Mammary epithelial cell (primary cell): ENCODE measurements at regions of chr11 and their contacts with region 1.

Region 1: DNA sequence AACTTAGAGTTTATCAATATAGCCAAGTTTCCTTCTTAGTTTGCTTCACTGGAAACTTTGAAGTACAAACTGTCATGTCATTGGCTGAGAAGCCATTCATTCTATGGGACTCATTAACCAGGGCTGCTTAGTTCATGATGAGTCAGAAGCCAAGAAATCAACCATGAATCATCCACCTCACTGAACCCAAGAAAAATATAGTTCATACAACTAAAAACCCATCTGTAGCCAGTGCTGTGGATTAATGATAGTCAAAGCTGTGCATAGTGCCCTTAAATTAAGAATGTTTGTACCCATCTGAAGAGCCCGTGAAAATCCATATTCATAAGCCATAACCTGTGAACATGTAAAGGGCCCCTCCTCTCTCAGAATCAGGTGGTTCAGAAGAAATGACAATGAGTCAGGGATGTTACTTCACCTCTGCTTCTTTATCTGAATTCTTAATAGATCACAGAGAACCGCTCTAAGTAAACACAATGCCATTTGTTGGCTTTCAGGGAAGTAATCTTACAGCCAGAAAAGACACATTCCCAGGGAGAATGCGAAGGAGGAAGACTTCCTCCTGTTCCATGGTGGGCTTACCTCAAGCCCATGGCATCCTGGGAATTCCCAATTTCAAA is 25.4 kb downstream of the MMP20 start:
- DNase-seq: peak; percentile 95
- H3K4me3 ChIP-seq: peak overlapping the region in 1 of 3 experiments; percentile 10
- H3K27ac ChIP-seq: peak overlapping the region; percentile 91
- H3K4me1 ChIP-seq: peaks cover 50% of the 10 kb centered on the region
- H3K27me3 ChIP-seq: no peaks in the 10 kb centered on the region
- CTCF ChIP-seq: no peak

Region 2: DNA sequence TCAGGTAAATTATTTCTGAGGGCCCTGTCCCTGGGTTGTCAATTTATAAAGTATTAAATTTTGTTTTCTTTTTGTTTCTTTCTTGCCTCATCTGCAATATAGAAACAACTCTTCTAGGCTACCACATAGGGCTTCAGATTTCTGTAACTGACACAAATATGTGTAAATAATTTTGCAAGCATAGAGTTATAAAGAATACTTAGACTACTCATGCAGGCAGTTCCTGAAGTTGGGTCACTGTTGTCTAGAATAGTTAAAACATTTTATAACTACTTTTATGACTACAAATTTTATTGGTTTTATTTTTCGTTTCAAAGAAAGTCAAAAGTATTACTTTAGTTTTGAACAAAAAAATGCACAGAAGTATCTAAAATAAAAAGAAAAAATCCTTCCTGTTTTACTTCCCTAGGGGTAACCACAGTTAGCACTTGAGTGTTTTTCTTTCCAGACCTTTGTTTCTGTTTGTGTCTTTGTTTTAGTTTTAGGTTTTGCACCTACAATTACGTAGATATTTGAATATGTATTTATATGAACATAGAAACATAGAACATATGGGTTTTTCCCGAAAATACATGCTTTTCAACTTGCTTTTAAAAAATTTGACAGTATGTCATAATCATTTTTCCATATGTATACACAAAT is 134.8 kb before region 1 on chr11:
- CTCF ChIA-PET with region 1: no interaction called
- dilution Hi-C with region 1: no loop called
- in situ Hi-C with region 1: no loop called
- intact Hi-C with region 1: no loop called
- DNase-seq: no peak
- H3K4me3 ChIP-seq: no peak overlapping the region
- H3K27ac ChIP-seq: no peak overlapping the region
- H3K4me1 ChIP-seq: peaks cover 29% of the 10 kb centered on the region
- H3K27me3 ChIP-seq: no peaks in the 10 kb centered on the region
- CTCF ChIP-seq: no peak

Region 3: GRCh38 chr11:102500829-102501228 is 98.9 kb before region 1 on chr11:
- CTCF ChIA-PET with region 1: no interaction called
- dilution Hi-C with region 1: no loop called
- in situ Hi-C with region 1: loop called in 1 of 2 experiments (anchors 10 kb)
- intact Hi-C with region 1: no loop called
- DNase-seq: no peak
- H3K4me3 ChIP-seq: no peak overlapping the region
- H3K27ac ChIP-seq: no peak overlapping the region
- H3K4me1 ChIP-seq: no peaks in the 10 kb centered on the region
- H3K27me3 ChIP-seq: no peaks in the 10 kb centered on the region
- CTCF ChIP-seq: no peak

Region 4: DNA sequence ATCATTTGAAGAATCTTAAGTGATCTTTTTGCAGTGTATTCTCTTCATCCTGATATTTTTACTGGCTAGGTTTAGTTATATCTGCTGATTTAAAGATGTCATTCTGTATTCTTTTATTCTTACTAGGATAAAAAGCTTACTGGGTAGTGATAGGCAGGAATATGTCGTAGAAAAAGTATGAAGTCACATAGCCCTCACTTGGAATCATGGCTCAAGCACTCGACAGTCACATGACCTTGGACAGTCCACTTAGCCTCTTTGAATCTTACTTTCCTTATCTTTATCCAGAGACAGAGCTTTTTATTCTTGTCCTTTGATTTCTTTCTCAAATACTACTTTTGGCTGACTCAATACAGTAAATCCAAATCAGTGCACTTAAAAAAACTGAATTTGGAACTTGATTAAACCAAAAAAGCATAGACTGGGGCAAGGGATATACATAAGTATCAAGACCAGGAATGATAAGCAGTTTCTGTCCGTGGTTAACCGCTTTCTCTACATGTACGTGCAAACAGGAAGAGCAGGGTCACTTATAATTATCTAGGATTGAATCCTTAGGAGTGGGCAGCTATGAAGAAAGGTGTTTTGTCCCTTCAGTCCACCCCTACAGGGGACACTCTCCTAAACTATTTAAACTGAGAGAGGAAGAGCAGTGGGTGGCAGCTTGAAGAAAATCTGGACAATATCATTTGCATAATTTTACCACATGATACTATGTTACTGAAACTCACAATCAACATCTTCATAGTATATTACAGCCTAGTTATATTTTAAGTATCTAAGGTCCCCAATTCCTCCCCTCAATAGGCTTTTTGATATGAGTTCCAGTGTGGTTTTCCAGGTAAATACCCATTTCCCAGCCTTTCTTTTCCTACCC is 77.2 kb before region 1 on chr11:
- CTCF ChIA-PET with region 1: no interaction called
- dilution Hi-C with region 1: no loop called
- in situ Hi-C with region 1: no loop called
- intact Hi-C with region 1: loop called (anchors 5 kb)
- DNase-seq: no peak
- H3K4me3 ChIP-seq: no peak overlapping the region
- H3K27ac ChIP-seq: no peak overlapping the region
- H3K4me1 ChIP-seq: peaks cover 8% of the 10 kb centered on the region
- H3K27me3 ChIP-seq: no peaks in the 10 kb centered on the region
- CTCF ChIP-seq: no peak

Region 5: GRCh38 chr11:102680945-102681344 is 81.2 kb after region 1 on chr11:
- CTCF ChIA-PET with region 1: no interaction called
- dilution Hi-C with region 1: no loop called
- in situ Hi-C with region 1: no loop called
- intact Hi-C with region 1: no loop called
- DNase-seq: peak; percentile 24
- H3K4me3 ChIP-seq: no peak overlapping the region
- H3K27ac ChIP-seq: no peak overlapping the region
- H3K4me1 ChIP-seq: peaks cover 14% of the 10 kb centered on the region
- H3K27me3 ChIP-seq: no peaks in the 10 kb centered on the region
- CTCF ChIP-seq: no peak